MCF 10A (cell line): ENCODE measurements at regions of chr17 and their contacts with region 1.

Region 1: DNA sequence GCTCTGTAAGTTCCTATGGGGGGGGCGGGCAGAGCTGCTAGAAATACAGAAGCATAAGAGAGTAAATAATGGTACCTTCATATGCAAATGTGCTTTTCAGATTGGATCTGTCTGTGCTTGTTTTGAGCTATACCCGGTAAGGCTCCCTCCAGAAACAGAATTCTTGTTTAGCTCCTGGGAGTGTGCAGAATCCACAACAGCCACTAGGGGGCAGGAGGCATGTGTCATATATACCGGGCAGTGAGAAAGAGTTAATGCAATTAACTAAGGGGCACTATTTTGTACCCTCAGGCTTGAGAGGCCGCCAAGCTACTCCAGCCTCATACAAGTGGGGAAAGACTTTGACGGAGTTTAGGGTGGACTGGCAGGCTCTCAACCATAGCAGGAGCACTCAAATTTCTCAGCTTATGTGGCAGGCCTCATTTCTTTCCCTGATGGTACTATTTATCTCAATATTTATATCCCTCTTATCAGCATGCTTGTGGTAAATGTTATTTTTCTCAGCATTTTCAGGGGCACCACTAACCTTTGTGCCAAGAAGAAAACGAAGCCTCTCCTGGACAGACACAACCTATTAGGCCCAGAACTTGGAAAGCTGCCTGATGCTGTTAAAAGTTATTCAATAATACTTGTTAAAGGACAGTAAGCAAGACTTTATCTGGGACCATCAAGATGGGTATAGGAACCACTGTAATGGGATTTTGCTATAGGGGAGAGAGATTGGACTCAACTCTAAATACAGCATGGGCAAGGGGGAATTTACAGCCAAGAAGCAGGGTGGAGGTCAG is 10.7 kb upstream of the CENPV start:
- DNase-seq: peak; percentile 78
- H3K4me3 Mint-ChIP-seq: no peak overlapping the region
- H3K27ac Mint-ChIP-seq: no peak overlapping the region
- H3K4me1 Mint-ChIP-seq: no peaks in the 10 kb centered on the region
- H3K27me3 Mint-ChIP-seq: no peaks in the 10 kb centered on the region
- CTCF ChIP-seq: peak; percentile 74

Region 2: GRCh38 chr17:16141685-16142084 is 222.3 kb before region 1 on chr17:
- CTCF ChIA-PET with region 1: no interaction called
- POLR2A ChIA-PET with region 1: no interaction called
- intact Hi-C with region 1: no loop called
- DNase-seq: no peak
- H3K4me3 Mint-ChIP-seq: no peak overlapping the region
- H3K27ac Mint-ChIP-seq: no peak overlapping the region
- H3K4me1 Mint-ChIP-seq: no peaks in the 10 kb centered on the region
- H3K27me3 Mint-ChIP-seq: no peaks in the 10 kb centered on the region
- CTCF ChIP-seq: no peak

Region 3: GRCh38 chr17:16158714-16159113 is 205.2 kb before region 1 on chr17:
- CTCF ChIA-PET with region 1: no interaction called
- POLR2A ChIA-PET with region 1: no interaction called
- intact Hi-C with region 1: no loop called
- DNase-seq: no peak
- H3K4me3 Mint-ChIP-seq: no peak overlapping the region
- H3K27ac Mint-ChIP-seq: no peak overlapping the region
- H3K4me1 Mint-ChIP-seq: peaks cover 9% of the 10 kb centered on the region
- H3K27me3 Mint-ChIP-seq: no peaks in the 10 kb centered on the region
- CTCF ChIP-seq: no peak

Region 4: GRCh38 chr17:16353317-16354174 is 10.4 kb before region 1 on chr17 and contains the start of gene CENPV:
- CTCF ChIA-PET with region 1: interaction called, 80 read pairs
- POLR2A ChIA-PET with region 1: interaction called, 29 read pairs
- intact Hi-C with region 1: no loop called
- DNase-seq: peak; percentile 11
- H3K4me3 Mint-ChIP-seq: peak within 1 kb of the TSS; percentile 81
- H3K27ac Mint-ChIP-seq: peak within 1 kb of the TSS; percentile 43
- H3K4me1 Mint-ChIP-seq: peaks cover 4% of the 10 kb centered on the region
- H3K27me3 Mint-ChIP-seq: no peaks in the 10 kb centered on the region
- CTCF ChIP-seq: peak; percentile 9
- total RNA-seq, gene CENPV: 22.4 and 27.7 TPM in 2 replicates

Region 5: GRCh38 chr17:16444258-16444886 is 80.4 kb after region 1 on chr17:
- CTCF ChIA-PET with region 1: interaction called, 44 read pairs
- POLR2A ChIA-PET with region 1: interaction called, 52 read pairs
- intact Hi-C with region 1: loop called (anchors 5 kb)
- DNase-seq: peak; percentile 54
- H3K4me3 Mint-ChIP-seq: no peak overlapping the region
- H3K27ac Mint-ChIP-seq: no peak overlapping the region
- H3K4me1 Mint-ChIP-seq: peaks cover 13% of the 10 kb centered on the region
- H3K27me3 Mint-ChIP-seq: no peaks in the 10 kb centered on the region
- CTCF ChIP-seq: no peak

Region 6: DNA sequence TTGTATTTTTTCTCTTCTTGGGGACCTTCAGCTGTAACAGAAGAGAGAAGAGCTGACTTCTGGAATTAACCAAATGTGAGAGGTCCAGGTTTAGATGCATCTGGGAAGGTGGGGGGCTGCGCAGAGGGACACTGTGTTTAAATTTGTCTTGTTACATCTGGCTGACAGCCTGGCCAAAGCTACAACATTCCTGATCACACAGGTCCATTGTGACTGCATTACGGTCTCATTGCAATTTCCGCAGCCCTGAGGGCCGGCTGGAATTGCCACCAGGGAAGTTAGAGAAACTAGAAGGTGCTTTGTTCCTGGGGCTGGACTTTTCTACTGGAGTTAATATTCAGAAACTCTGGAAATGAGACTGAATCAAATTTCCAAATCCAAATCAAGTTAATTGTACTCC is 166.0 kb after region 1 on chr17:
- CTCF ChIA-PET with region 1: interaction called, 10 read pairs
- POLR2A ChIA-PET with region 1: no interaction called
- intact Hi-C with region 1: no loop called
- DNase-seq: no peak
- H3K4me3 Mint-ChIP-seq: no peak overlapping the region
- H3K27ac Mint-ChIP-seq: no peak overlapping the region
- H3K4me1 Mint-ChIP-seq: no peaks in the 10 kb centered on the region
- H3K27me3 Mint-ChIP-seq: peaks cover 60% of the 10 kb centered on the region
- CTCF ChIP-seq: no peak